CD14-positive monocyte (primary cell): ENCODE measurements at regions of chr1 and their contacts with region 1.

Region 1: GRCh38 chr1:55277377-55278130 is 62.4 kb upstream of the USP24 start:
- DNase-seq: peak; percentile 62 to 69 (median 67)
- H3K4me3 ChIP-seq: no peak overlapping the region
- H3K4me3 Mint-ChIP-seq: peak overlapping the region in 1 of 2 donors; percentile 28
- H3K27ac ChIP-seq: no peak overlapping the region
- H3K27ac Mint-ChIP-seq: peak overlapping the region in 1 of 7 donors; percentile 60
- H3K4me1 ChIP-seq: peaks cover 3 to 11% of the 10 kb centered on the region in 2 donors
- H3K4me1 Mint-ChIP-seq: peaks cover 17% of the 10 kb centered on the region
- H3K27me3 ChIP-seq: no peaks in the 10 kb centered on the region
- H3K27me3 Mint-ChIP-seq: peaks cover 0 to 7% (median 0%) of the 10 kb centered on the region in 3 donors
- CTCF ChIP-seq: peak; percentile 79

Region 2: DNA sequence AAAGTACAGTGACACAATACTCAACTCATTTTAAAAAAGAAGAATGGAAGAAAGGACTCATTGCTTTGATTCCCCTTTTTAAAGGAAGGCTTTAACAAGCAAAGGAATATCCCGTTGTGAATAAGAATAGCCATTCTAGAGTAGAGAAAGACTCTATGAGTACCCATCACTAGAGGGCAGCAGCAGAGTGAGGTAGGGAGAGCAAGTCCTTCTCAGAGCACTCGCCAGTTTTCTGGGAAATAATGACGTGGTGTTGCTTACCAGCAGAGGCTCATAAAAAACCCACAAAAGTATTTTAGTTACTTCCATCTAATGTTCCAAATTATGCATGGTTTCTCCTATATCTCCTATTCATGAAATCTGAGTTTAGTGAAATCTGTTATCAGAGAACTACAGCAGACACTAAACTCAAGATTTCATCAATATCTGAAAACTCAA is 137.0 kb before region 1 on chr1:
- intact Hi-C with region 1: loop called (anchors 2 to 5 kb)
- DNase-seq: peak; percentile 38 to 65 (median 62)
- H3K4me3 ChIP-seq: no peak overlapping the region
- H3K4me3 Mint-ChIP-seq: no peak overlapping the region
- H3K27ac ChIP-seq: no peak overlapping the region
- H3K27ac Mint-ChIP-seq: no peak overlapping the region
- H3K4me1 ChIP-seq: no peaks in the 10 kb centered on the region
- H3K4me1 Mint-ChIP-seq: peaks cover 6% of the 10 kb centered on the region
- H3K27me3 ChIP-seq: no peaks in the 10 kb centered on the region
- H3K27me3 Mint-ChIP-seq: peaks cover 0 to 1% (median 0%) of the 10 kb centered on the region in 3 donors
- CTCF ChIP-seq: peak; percentile 88

Region 3: GRCh38 chr1:55188909-55189308 is 88.6 kb before region 1 on chr1:
- intact Hi-C with region 1: loop called in 1 of 2 experiments (anchors 10 kb)
- DNase-seq: no peak
- H3K4me3 ChIP-seq: no peak overlapping the region
- H3K4me3 Mint-ChIP-seq: no peak overlapping the region
- H3K27ac ChIP-seq: no peak overlapping the region
- H3K27ac Mint-ChIP-seq: peak overlapping the region in 1 of 7 donors; percentile 3
- H3K4me1 ChIP-seq: no peaks in the 10 kb centered on the region
- H3K4me1 Mint-ChIP-seq: peaks cover 20% of the 10 kb centered on the region
- H3K27me3 ChIP-seq: no peaks in the 10 kb centered on the region
- H3K27me3 Mint-ChIP-seq: no peaks in the 10 kb centered on the region
- CTCF ChIP-seq: no peak

Region 4: GRCh38 chr1:55215256-55216021 is 62.1 kb before region 1 on chr1 and contains the start of gene USP24:
- intact Hi-C with region 1: loop called in 1 of 2 experiments (anchors 10 kb)
- DNase-seq: peak; percentile 61 to 76 (median 64)
- H3K4me3 ChIP-seq: peak within 1 kb of the TSS; percentile 62 to 88 (median 77)
- H3K4me3 Mint-ChIP-seq: peak within 1 kb of the TSS; percentile 95 to 99
- H3K27ac ChIP-seq: peak within 1 kb of the TSS; percentile 84 to 94
- H3K27ac Mint-ChIP-seq: peak within 1 kb of the TSS; percentile 86 to 97 (median 96)
- H3K4me1 ChIP-seq: peaks cover 62 to 72% of the 10 kb centered on the region in 2 donors
- H3K4me1 Mint-ChIP-seq: peaks cover 69% of the 10 kb centered on the region
- H3K27me3 ChIP-seq: no peaks in the 10 kb centered on the region
- H3K27me3 Mint-ChIP-seq: peaks cover 0 to 5% (median 0%) of the 10 kb centered on the region in 3 donors
- CTCF ChIP-seq: no peak
- polyA plus RNA-seq, gene USP24: 1.1 to 14.2 (median 2.1) TPM